HCT116 (cell line): ENCODE measurements at regions of chr12 and their contacts with region 1.

Region 1: GRCh38 chr12:108562348-108563135 is at the start of gene ISCU:
- DNase-seq: peak; percentile 95
- ATAC-seq: peak; percentile 75
- H3K4me3 ChIP-seq: peak within 1 kb of the TSS; percentile 85 to 96
- H3K27ac ChIP-seq: peak within 1 kb of the TSS; percentile 76
- H3K4me1 ChIP-seq: peaks cover 30 to 49% of the 10 kb centered on the region in 2 experiments
- H3K27me3 ChIP-seq: no peaks in the 10 kb centered on the region
- CTCF ChIP-seq: no peak
- POLR2A ChIP-seq: peak; percentile 55
- RAD21 ChIP-seq: no peak
- total RNA-seq, gene ISCU: 89.6 TPM

Region 2: DNA sequence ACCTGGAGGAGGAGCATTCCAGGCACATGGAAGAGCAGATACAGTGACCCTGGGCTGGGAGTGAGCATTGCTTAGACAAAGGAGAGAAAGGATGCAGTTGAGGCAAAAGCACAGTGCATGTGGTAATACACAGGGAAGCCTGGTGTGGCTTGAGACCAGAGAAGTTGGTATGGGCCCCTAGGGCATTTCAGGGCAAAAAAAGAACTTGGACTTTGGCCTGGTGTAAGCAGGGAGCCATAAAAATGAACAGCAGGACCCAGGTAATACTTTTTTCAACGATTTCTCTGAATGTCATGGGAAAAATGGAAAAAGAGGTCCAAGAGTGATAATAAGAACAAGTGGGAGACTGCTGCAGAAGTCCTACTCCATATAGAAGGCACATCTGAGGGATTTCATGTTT is 624.1 kb before region 1 on chr12:
- CTCF ChIA-PET with region 1: no interaction called
- POLR2A ChIA-PET with region 1: no interaction called
- RAD21 ChIA-PET with region 1: no interaction called
- intact Hi-C with region 1: no loop called
- DNase-seq: no peak
- ATAC-seq: no peak
- H3K4me3 ChIP-seq: no peak overlapping the region
- H3K27ac ChIP-seq: no peak overlapping the region
- H3K4me1 ChIP-seq: no peaks in the 10 kb centered on the region
- H3K27me3 ChIP-seq: peaks cover 67% of the 10 kb centered on the region
- CTCF ChIP-seq: no peak
- POLR2A ChIP-seq: no peak
- RAD21 ChIP-seq: no peak

Region 3: GRCh38 chr12:108282676-108283075 is 279.9 kb before region 1 on chr12:
- CTCF ChIA-PET with region 1: no interaction called
- POLR2A ChIA-PET with region 1: no interaction called
- RAD21 ChIA-PET with region 1: no interaction called
- intact Hi-C with region 1: no loop called
- DNase-seq: no peak
- ATAC-seq: no peak
- H3K4me3 ChIP-seq: no peak overlapping the region
- H3K27ac ChIP-seq: no peak overlapping the region
- H3K4me1 ChIP-seq: no peaks in the 10 kb centered on the region
- H3K27me3 ChIP-seq: peaks cover 75% of the 10 kb centered on the region
- CTCF ChIP-seq: no peak
- POLR2A ChIP-seq: no peak
- RAD21 ChIP-seq: no peak

Region 4: GRCh38 chr12:108731105-108731865 is 168.7 kb after region 1 on chr12 and contains the start of gene CORO1C:
- CTCF ChIA-PET with region 1: no interaction called
- POLR2A ChIA-PET with region 1: no interaction called
- RAD21 ChIA-PET with region 1: no interaction called
- intact Hi-C with region 1: loop called (anchors 2 kb)
- DNase-seq: peak; percentile 92
- ATAC-seq: peak; percentile 79
- H3K4me3 ChIP-seq: peak within 1 kb of the TSS; percentile 71 to 85
- H3K27ac ChIP-seq: peak within 1 kb of the TSS; percentile 78
- H3K4me1 ChIP-seq: peaks cover 32 to 59% of the 10 kb centered on the region in 2 experiments
- H3K27me3 ChIP-seq: no peaks in the 10 kb centered on the region
- CTCF ChIP-seq: peak in 2 of 3 experiments; percentile 69 to 80; a peak in 4 of 6 replicates
- POLR2A ChIP-seq: peak; percentile 59
- RAD21 ChIP-seq: peak; percentile 44; the same call in 1 of the 2 replicates
- total RNA-seq, gene CORO1C: 138 TPM

Region 5: DNA sequence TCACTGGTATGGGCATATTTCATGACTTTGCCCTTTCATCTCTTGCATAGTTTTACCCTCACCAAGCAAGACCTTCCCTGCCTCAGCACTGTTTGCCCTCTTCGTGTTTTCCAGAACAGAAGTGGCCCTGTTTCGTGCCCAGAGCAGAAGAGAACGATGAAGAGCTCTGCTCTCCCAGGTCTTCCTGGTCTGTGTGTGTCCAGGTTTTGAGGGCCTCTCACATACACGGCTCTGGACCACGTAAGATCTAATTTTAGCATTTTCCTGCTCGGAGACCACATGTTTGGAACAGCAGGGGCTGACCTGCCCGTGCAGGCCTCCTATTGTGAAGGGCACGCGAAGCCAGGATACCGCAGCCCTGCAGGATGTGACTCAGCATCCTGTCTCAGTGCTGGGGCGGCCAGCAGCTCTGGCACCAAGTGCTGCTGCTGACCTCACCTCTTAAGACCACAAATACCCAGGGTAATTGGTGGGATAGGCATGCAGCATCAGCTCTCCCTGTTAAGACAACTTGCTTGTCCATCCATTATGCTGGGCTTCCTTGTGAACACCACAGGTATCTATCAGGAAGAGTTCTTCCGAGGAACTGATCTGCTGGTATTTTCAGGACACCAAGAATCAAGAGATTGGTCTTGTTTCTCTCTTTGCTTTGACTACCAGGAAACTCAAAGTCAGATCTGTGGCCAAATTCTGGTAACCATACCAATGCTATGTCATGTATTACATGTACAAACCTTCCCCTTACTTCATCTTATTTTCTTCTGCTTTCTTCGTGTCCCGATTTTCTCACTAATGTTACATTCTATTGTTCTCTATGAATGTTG is 275.9 kb after region 1 on chr12:
- CTCF ChIA-PET with region 1: no interaction called
- POLR2A ChIA-PET with region 1: no interaction called
- RAD21 ChIA-PET with region 1: no interaction called
- intact Hi-C with region 1: loop called (anchors 10 kb)
- DNase-seq: peak; percentile 97
- ATAC-seq: peak; percentile 85
- H3K4me3 ChIP-seq: peak overlapping the region in 1 of 2 experiments; percentile 11; a peak in 2 of 4 replicates
- H3K27ac ChIP-seq: peak overlapping the region; percentile 99
- H3K4me1 ChIP-seq: peaks cover 78 to 95% of the 10 kb centered on the region in 2 experiments
- H3K27me3 ChIP-seq: no peaks in the 10 kb centered on the region
- CTCF ChIP-seq: no peak
- POLR2A ChIP-seq: no peak
- RAD21 ChIP-seq: no peak

Region 6: DNA sequence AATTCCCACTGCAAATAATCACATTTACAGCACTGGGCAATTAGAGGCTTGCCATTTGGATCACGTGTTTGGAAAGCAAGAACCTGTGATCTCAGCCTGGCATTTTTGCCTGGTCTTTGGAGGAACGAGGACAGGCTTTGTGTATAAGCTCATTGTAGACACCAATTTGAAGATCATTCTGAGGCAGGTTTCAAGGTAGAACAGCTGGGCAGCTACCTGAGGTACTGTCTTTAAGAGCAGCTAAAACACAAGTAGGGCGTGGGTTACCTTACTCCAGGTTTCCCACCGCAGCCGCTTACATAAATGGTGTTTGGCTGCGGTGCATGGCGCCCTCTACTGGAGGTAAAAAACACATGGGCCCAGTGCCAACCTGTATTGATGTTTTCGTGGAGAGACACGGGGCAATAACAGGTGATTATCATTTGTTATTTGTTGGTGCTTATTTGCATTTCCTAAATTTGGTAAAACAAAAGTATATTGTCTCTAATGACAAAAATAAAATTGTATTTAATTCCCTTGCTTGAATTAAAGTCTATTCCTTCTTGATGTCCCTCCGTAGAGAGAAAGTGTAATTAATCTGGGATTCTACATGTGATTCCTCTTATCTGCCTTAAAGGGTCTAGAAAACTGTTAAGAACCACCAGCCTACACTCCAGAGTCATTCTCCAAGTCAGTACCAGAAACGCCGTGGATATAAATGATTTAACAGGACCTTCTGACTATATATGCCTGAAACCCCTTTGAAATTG is 388.6 kb after region 1 on chr12:
- CTCF ChIA-PET with region 1: no interaction called
- POLR2A ChIA-PET with region 1: no interaction called
- RAD21 ChIA-PET with region 1: no interaction called
- intact Hi-C with region 1: loop called (anchors 5 kb)
- DNase-seq: peak; percentile 70
- ATAC-seq: peak; percentile 85
- H3K4me3 ChIP-seq: peak overlapping the region; percentile 2 to 27; a peak in 2 of 4 replicates
- H3K27ac ChIP-seq: no peak overlapping the region
- H3K4me1 ChIP-seq: peaks cover 0 to 9% of the 10 kb centered on the region in 2 experiments; a peak in 2 of 4 replicates
- H3K27me3 ChIP-seq: no peaks in the 10 kb centered on the region
- CTCF ChIP-seq: peak; percentile 77 to 95 (median 86)
- POLR2A ChIP-seq: no peak
- RAD21 ChIP-seq: peak; percentile 96

Region 7: DNA sequence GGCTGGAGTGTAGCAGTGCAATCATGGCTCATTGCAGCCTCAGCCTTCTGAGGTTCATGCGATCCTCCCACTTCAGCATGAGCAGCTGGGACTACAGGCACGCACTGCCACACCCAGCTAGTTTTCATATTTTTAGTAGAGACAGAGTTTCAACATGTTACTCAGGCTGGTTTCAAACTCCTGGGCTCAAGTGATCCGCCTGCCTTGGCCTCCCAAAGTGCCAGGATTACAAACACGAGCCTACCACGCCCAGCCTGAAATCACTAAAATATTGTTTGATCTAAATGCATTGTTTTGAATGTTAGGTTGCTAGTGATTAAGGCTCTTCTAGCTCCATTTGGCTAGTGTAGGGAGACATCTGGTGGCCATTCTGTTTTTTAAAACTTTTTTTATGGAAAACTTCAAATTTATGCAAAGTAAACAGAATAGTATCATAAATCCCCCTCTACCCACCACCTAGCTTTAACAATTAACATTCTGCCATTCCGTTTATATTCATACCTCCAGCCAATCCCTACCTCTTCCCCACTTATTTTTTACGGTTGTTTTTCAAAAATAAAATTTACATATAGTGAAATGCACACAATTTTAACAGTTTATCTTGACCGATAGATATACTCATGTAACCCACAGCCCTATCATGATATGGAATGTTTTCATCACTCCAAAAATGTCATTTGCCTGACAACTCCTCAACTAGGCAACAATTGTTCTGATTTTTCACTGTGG is 823.0 kb after region 1 on chr12:
- CTCF ChIA-PET with region 1: interaction called, 3 read pairs
- POLR2A ChIA-PET with region 1: no interaction called
- RAD21 ChIA-PET with region 1: no interaction called
- intact Hi-C with region 1: loop called (anchors 5 kb)
- DNase-seq: peak; percentile 51
- ATAC-seq: peak; percentile 78
- H3K4me3 ChIP-seq: peak overlapping the region in 1 of 2 experiments; percentile 19; a peak in 2 of 4 replicates
- H3K27ac ChIP-seq: no peak overlapping the region
- H3K4me1 ChIP-seq: peaks cover 5 to 7% of the 10 kb centered on the region in 2 experiments; a peak in 3 of 4 replicates
- H3K27me3 ChIP-seq: no peaks in the 10 kb centered on the region
- CTCF ChIP-seq: peak; percentile 42 to 96 (median 64); a peak in 5 of 6 replicates
- POLR2A ChIP-seq: no peak
- RAD21 ChIP-seq: peak; percentile 96